ENCODE measurements at regions of chr18 and their contacts with region 1.

Region 1: GRCh38 chr18:57621246-57621604 is 411 bp downstream of the NARS1 start:
- DNase-seq: no peak
- ATAC-seq: peak; percentile 52 to 66; a peak in 5 of 6 replicates
- H3K4me3 ChIP-seq: peak overlapping the region; percentile 69
- H3K27ac ChIP-seq: peak overlapping the region; percentile 83 to 99
- H3K4me1 ChIP-seq: peaks cover 9% of the 10 kb centered on the region; the same call in 2 of the 3 replicates
- CTCF ChIP-seq: no peak
- EP300 ChIP-seq: no peak
- POLR2A ChIP-seq: no peak
- RAD21 ChIP-seq: no peak

Region 2: DNA sequence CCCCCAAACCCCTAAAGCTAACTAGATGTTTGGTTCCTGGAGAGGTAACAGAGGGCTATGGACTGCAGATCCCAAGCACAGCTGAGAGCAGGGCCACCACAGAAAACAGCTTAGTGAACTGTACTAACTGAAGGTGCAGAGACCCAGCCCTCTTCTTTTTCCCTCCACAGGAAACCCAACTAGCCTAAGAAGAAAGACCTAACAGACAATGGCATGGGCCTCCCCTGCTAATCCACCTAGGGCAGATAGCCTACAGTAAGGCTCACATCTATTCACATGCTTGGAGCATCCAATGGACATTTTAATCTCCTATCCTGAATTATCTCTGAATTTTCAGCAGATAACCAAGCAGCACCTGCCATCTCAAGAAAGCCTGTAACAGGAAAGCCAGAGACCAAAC is 25.9 kb before region 1 on chr18:
- CTCF ChIA-PET with region 1: no interaction called
- POLR2A ChIA-PET with region 1: interaction called, 14 read pairs
- DNase-seq: no peak
- ATAC-seq: no peak; a peak in 1 of 6 replicates
- H3K4me3 ChIP-seq: no peak overlapping the region
- H3K27ac ChIP-seq: no peak overlapping the region
- H3K4me1 ChIP-seq: no peaks in the 10 kb centered on the region
- CTCF ChIP-seq: no peak
- EP300 ChIP-seq: no peak
- POLR2A ChIP-seq: no peak
- RAD21 ChIP-seq: no peak

Measured in A549 (cell line).